ENCODE measurements at regions of chr22 and their contacts with region 1.

Region 1: DNA sequence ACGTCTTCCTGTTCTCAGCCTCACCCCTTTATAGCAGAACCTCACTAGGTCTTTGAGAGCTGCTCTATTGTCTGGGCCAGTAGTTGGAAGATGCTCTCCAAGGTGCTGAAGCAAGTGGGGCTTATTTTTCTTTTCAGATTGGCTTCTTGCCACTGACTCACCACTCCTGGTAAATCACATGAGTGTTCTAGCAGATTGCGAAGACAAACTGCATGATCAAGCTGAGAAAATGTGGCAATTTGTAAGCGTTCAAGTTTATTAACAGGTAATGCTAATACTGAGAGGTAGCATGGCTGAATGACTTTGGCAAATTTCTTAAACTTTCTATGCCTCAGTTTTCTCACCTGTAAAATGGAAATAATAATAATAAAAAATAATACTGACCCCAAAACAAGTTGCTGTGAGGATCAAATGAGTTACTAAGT is 59.2 kb downstream of the CACNG2 start:
- DNase-seq: peak; percentile 92
- ATAC-seq: peak; percentile 85
- H3K4me3 ChIP-seq: no peak overlapping the region
- H3K27ac ChIP-seq: no peak overlapping the region
- H3K4me1 ChIP-seq: no peaks in the 10 kb centered on the region
- H3K27me3 ChIP-seq: peaks cover 11% of the 10 kb centered on the region
- CTCF ChIP-seq: no peak
- POLR2A ChIP-seq: no peak
- RAD21 ChIP-seq: no peak

Region 2: DNA sequence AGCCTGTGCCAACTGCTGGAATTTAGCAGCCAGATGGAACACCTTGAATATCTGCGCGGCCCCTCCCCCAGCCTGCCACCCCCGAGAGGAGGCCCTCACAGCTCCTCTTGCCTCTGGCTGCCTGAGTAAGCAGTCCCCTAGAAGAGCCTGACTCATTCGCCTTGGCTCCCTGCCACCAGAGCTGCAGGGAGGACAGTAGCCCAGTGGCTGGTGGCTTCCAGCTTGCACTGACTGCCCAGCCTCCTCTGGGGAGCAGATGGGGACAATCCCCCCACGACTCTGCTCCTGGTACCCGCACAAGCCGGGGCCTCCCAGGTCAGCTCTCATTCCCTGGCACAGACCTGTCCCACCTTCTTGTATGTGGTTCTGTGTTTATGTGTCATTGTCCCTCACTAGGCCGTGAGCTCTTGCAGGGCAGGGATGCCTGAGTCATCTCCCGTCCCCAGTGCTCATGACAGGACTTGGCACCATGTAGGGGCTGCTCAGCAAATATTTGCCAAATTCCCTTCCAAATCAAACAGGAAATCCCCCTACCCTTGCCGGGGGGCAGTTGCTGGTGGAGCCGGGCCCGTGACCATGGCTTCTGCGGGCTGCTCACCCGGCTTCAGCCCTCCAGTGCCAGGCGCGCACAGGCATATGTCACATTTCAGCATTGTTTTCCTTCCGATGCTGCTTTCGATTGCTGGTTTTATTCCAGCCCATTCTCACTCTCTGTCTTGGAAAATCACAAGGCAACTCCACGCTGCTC is 15.6 kb after region 1 on chr22:
- CTCF ChIA-PET with region 1: no interaction called
- POLR2A ChIA-PET with region 1: no interaction called
- dilution Hi-C with region 1: no loop called
- in situ Hi-C with region 1: no loop called
- intact Hi-C with region 1: no loop called
- DNase-seq: peak; percentile 88
- ATAC-seq: peak; percentile 100
- H3K4me3 ChIP-seq: no peak overlapping the region
- H3K27ac ChIP-seq: no peak overlapping the region
- H3K4me1 ChIP-seq: peaks cover 11% of the 10 kb centered on the region; the same call in 1 of the 2 replicates
- H3K27me3 ChIP-seq: peaks cover 22% of the 10 kb centered on the region
- CTCF ChIP-seq: no peak
- POLR2A ChIP-seq: no peak
- RAD21 ChIP-seq: 0 out of 2 replicates have a peak, but pooled peaks have one; percentile 9

Region 3: GRCh38 chr22:36702842-36703215 is 58.5 kb after region 1 on chr22:
- CTCF ChIA-PET with region 1: no interaction called
- POLR2A ChIA-PET with region 1: no interaction called
- dilution Hi-C with region 1: no loop called
- in situ Hi-C with region 1: no loop called
- intact Hi-C with region 1: loop called (anchors 1 kb)
- DNase-seq: no peak
- ATAC-seq: no peak
- H3K4me3 ChIP-seq: no peak overlapping the region; the same call in 1 of the 2 replicates
- H3K27ac ChIP-seq: no peak overlapping the region
- H3K4me1 ChIP-seq: peaks cover 3% of the 10 kb centered on the region; the same call in 1 of the 2 replicates
- H3K27me3 ChIP-seq: peaks cover 31% of the 10 kb centered on the region
- CTCF ChIP-seq: no peak
- POLR2A ChIP-seq: no peak
- RAD21 ChIP-seq: no peak

Measured in IMR-90 (cell line).